Head of caudate nucleus (tissue), 42 donors: ENCODE measurements at regions of chr2 and their contacts with region 1.

Region 1: DNA sequence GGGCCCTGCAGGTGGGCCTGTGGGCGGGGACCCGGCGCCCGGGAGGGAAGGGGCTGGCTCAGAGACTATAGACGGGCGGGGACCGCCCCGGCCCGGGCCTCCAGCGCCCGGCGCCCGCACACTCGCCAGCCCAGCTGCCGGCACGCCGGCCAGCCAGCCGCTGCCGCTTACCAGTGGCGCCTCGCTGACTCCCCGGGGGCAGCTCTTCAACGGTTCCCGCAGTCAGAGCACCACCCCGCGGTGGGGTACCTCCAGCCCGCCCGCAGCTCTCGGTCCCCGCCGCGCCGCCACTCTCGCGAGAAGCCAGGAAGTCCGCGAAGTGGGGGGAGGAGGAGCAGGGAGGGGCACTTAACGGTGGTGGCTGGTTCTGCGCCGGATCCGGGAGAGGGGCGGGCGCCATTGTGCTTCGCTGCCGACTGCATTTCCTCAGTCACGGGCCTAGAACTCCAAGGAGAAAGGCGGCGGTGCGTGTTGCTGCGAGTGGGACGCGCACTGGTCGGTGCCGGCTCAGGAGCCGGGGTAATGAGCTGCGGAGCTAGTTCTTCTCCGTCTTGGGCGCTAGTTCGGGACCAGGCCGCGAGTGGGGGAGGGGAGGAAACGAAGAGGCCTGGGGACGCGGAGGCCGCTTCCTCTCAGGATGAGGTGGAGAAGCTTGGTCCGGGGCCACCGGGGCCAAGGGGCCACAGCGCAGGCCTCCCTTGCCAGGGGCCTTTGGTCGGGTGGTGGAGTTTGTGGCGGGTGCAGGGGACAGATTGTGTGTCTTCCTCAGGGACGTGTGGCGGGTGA is at the start of gene MARCHF7:
- DNase-seq: peak; percentile 88 to 99 (median 97)

Region 2: GRCh38 chr2:159286709-159287441 is 425.5 kb before region 1 on chr2:
- intact Hi-C with region 1: loop called (anchors 10 kb)
- DNase-seq: peak; percentile 95 to 100 (median 99)

Region 3: DNA sequence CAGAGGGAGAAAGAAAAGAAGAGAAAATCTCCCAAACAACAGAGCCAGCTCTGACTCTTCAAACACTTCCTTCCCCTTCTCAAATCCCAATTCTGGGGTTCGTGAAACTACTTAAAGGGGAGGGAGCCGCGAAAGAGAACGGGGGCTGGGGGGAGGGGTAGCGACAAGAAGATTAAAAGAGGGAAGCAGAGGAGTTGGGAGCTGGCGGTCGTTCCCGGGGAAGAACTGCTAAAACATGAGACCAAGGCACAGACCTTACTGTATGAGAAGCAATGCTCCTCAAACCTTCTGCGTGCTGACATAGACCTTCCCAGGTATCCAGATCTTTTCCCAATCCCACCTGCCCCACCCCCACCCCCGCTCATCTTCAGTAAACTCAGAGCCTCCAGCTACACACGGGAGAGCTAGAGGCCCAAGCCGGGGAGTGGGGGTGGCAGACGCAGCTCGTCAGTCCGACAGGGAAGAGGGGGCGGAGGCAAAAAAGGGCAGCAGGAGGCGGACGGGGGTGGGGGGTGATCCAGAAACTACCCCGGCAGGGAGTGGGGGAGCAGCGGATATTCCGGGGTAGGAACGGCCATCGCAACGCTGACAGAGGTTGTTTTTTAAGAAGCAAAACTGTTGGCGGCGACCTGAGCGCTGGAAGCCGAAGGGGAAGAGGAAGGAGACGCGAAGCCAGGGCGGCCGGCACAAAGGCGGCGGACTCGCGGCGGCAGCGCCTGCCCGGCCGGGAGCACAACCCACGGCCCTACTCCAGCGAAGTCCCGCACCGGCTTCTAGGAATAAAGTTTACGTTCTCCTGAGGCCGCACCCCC is 97.0 kb before region 1 on chr2:
- intact Hi-C with region 1: loop called (anchors 5 kb)
- DNase-seq: peak; percentile 64 to 94 (median 86)

Region 4: DNA sequence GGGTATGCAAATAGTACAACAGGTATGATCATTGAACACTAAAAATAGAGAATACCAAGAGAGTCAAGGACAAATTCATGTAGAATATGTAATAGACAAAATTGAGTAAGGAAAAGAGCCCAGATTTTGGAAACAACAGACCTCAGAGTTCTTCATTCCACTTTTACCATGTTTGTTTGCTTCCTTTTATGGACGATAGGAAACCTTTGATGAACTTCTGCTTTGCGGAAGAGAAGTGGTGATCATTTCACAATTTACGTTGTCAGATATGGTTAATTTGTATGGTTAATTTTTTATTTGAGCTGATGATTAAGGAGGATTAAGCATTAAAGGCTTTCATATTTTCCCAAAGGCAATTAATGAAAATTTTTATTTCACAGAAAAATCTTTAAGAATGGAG is 16.3 kb after region 1 on chr2:
- intact Hi-C with region 1: no loop called
- DNase-seq: no peak

Region 5: DNA sequence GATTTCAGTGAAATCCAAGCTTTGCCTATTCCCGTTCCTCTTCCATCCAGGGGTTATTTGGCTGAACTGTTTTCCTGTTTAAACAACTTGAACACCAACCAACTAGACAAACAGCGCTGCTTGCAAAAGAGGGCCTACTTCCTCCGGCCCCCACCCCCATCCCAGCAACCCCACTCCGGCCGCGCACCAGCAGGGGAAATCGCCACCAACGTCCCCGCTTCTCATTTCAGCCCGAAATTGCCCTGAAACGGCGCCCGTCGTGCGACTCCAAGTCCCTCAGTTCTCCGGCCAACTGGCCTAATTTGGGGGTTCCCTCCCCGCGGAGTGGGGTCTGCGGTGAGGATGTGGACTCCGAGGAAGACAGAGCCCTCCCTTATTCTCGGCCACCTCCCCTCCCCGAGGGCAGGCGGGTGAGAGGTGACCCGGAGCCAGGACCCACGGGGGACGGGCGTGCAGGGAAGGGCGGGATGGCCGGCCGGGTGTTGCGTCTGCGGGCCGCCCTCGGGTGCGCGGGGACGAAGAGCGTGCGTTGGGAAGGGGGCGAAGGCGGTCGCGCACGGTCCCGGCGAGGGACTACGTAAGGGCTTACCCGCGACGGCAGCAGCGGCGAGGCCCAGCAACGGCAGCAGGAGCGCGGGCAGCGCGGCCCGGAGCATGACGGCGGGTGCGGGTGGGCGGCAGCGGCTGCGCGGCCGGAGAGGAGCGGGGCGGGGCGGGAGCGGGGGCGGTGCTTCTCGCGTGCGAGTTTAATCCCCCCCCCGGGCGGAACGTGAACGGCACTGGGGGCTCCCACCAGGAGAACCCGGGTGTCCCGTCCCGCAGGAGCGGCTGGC is 85.4 kb after region 1 on chr2 and contains the start of gene CD302:
- intact Hi-C with region 1: loop called (anchors 10 kb)
- DNase-seq: peak in 41 of 42 donors; percentile 19 to 80 (median 59)